Activated T-helper 1 cell treated with anti-CD3 and anti-CD28 coated beads, Interleukin-12 subunit alpha, Interleukin-12 subunit beta, Interleukin-2, Interleukin-4 antibody, amounts not matched to agents 30 ng/mL and 10 ng/mL and 1 ng/mL, durations not matched to agents 14 hours and 24 hours and 36 hours (primary cell): ENCODE measurements at regions of chr4 and their contacts with region 1.

Region 1: GRCh38 chr4:82900331-82901128 is at the start of gene THAP9:
- DNase-seq: peak; percentile 98
- H3K4me3 Mint-ChIP-seq: no peak within 1 kb of the TSS
- H3K27ac Mint-ChIP-seq: no peak within 1 kb of the TSS
- H3K4me1 Mint-ChIP-seq: peaks cover 27% of the 10 kb centered on the region
- H3K27me3 Mint-ChIP-seq: peaks cover 2% of the 10 kb centered on the region
- total RNA-seq, gene THAP9: 1.9 and 2.3 TPM in 2 replicates

Region 2: GRCh38 chr4:82284858-82285805 is 615.4 kb before region 1 on chr4:
- intact Hi-C with region 1: loop called (anchors 2 kb)
- DNase-seq: peak; percentile 99
- H3K4me3 Mint-ChIP-seq: peak overlapping the region; percentile 80
- H3K27ac Mint-ChIP-seq: peak overlapping the region; percentile 27
- H3K4me1 Mint-ChIP-seq: peaks cover 14% of the 10 kb centered on the region
- H3K27me3 Mint-ChIP-seq: peaks cover 24% of the 10 kb centered on the region

Region 3: DNA sequence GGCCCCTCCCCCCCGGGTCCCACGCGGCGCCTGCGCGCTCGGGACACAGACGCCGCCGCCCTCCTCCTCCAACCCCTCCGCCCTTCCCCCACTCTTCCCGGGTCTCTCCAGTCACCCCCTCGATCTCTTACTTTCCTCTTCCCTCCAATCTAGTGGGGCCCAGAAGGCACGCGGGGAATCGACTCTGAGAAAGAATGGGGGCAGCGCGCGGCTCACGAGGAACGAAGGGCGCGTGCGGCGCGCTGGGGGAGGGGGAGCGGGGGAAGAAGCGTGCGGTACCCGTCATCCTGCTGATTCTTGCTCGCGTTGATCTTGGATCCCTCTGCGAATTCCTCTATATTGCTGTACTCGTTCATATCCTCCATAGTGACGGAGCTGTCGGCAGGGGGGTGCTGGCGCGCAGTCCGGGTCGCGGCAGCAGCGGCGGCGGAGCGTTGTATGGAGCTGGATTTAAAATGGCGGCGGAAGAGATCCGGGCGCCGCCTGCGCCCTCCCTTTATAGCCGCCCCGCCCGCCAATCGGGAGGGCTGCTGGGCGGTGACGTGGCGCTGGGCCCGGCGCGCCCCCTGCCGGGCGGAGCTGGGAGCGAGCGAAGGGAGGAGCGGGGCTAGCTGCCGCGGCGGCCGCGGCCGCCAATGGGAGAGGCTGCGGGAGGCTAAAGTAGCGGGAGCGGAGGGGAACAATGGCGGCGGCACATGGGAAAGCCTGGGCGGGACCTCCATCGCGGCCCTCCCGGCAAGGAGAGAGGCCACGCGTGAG is 471.4 kb before region 1 on chr4:
- intact Hi-C with region 1: loop called (anchors 1 kb)
- DNase-seq: peak; percentile 90
- H3K4me3 Mint-ChIP-seq: peak overlapping the region; percentile 99
- H3K27ac Mint-ChIP-seq: peak overlapping the region; percentile 99
- H3K4me1 Mint-ChIP-seq: peaks cover 69% of the 10 kb centered on the region
- H3K27me3 Mint-ChIP-seq: no peaks in the 10 kb centered on the region

Region 4: DNA sequence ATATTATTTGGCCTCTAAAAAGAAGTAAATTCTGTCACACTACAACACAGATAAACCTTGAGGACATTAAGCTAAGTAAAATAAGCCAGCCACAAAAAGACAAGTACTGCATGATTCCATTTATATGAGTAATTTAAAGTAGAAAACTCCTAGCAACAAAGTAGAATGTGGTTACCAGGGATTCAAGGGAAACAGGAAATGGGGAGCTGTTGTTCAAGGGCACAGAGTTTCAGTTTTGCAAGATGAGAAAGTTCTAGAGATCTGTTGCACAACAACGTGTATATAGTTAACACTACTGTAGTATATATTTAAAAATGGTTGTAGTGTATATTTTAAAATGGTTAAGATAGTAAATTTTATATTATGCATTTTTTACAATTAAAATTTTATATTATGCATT is 34.9 kb before region 1 on chr4:
- intact Hi-C with region 1: loop called (anchors 1 kb)
- DNase-seq: peak; percentile 24
- H3K4me3 Mint-ChIP-seq: no peak overlapping the region
- H3K27ac Mint-ChIP-seq: peak overlapping the region; percentile 91
- H3K4me1 Mint-ChIP-seq: peaks cover 48% of the 10 kb centered on the region
- H3K27me3 Mint-ChIP-seq: no peaks in the 10 kb centered on the region

Region 5: DNA sequence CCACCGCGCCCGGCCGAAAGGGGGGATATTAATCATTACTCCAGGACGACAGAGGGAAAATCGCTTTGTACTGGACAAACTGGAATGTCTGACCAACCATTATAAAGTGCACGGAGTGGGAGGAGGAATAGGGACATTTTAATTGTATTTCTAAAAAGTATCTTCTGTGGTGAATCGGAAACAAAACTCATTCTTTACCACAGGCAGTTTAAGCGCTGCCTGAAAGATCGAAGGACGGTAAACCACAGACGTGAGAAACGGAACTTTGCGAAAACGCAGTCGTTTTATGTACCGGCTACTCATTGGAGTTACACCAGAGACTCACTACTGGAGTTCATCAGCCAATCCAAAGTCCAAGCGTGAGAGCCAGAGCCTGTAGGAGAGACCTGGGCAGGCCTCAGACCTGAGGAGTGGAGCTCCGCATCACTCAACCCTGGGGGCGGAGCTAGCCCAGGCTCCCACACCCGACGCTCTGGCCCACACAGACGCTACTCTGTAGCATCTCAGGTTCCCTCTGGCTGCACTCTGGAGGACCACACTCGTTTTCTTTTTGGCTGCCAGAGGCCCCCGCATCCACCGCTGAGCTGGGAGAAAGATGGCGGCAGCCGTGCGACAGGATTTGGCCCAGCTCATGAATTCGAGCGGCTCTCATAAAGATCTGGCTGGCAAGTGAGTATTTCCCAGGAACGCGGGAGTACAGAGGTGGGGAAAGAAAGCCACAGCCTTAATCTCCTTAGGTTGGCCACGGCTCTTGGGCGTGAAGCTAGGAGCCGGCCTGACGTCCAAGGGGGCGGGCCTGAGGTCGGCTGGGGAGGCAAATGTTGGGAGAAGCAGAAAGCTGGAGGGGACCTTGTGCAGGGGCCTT is 134.3 kb after region 1 on chr4 and contains the start of gene COPS4:
- intact Hi-C with region 1: loop called (anchors 1 kb)
- DNase-seq: peak; percentile 95
- H3K4me3 Mint-ChIP-seq: peak within 1 kb of the TSS; percentile 98
- H3K27ac Mint-ChIP-seq: peak within 1 kb of the TSS; percentile 99
- H3K4me1 Mint-ChIP-seq: peaks cover 20% of the 10 kb centered on the region
- H3K27me3 Mint-ChIP-seq: peaks cover 6% of the 10 kb centered on the region
- total RNA-seq, gene COPS4: 35.8 and 38.8 TPM in 2 replicates

Region 6: GRCh38 chr4:83231620-83232076 is 331.1 kb after region 1 on chr4:
- intact Hi-C with region 1: loop called (anchors 1 kb)
- DNase-seq: peak; percentile 63
- H3K4me3 Mint-ChIP-seq: peak overlapping the region; percentile 52
- H3K27ac Mint-ChIP-seq: peak overlapping the region; percentile 69
- H3K4me1 Mint-ChIP-seq: peaks cover 59% of the 10 kb centered on the region
- H3K27me3 Mint-ChIP-seq: peaks cover 11% of the 10 kb centered on the region